ENCODE measurements at regions of chr17 and their contacts with region 1.

Region 1: DNA sequence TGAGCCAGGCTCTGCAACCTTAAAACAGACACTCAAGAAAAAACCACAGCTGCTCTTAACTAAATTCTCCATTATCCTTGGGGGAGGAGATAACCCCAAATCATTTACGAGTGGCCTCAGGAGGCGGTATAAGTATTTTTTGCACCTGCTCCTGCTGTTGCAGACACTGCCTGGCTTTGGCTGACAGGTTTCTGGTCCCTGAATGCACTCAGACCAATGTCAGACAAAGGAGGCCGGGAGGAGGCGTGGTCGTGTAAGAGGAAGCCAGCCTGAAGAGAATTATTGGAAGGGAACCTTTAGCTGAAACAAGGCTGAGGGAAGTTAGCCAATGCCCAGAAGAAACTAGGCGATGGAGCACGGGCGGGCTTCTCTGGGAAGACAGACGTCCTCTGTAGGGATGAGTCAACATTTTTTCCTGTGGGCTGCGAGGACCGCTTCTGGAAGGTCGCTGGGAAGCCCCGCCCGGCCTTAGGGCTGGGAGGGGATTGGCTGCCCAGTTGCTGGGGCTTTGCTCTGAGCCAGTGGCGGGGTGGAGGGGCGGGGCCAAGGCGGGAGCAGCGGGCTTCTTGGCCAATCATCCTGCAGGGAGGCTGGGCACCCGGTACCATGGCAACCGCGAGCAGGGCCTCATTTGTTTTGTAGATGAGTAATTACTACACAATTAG is 82.3 kb downstream of the CCDC182 start:
- DNase-seq: peak; percentile 95
- ATAC-seq: peak; percentile 97

Region 2: GRCh38 chr17:57255776-57256681 is 406.7 kb before region 1 on chr17 and contains the start of gene MSI2:
- intact Hi-C with region 1: loop called (anchors 5 kb)
- DNase-seq: peak; percentile 97
- ATAC-seq: peak; percentile 91
- total RNA-seq, gene MSI2: 96.8 TPM

Region 3: DNA sequence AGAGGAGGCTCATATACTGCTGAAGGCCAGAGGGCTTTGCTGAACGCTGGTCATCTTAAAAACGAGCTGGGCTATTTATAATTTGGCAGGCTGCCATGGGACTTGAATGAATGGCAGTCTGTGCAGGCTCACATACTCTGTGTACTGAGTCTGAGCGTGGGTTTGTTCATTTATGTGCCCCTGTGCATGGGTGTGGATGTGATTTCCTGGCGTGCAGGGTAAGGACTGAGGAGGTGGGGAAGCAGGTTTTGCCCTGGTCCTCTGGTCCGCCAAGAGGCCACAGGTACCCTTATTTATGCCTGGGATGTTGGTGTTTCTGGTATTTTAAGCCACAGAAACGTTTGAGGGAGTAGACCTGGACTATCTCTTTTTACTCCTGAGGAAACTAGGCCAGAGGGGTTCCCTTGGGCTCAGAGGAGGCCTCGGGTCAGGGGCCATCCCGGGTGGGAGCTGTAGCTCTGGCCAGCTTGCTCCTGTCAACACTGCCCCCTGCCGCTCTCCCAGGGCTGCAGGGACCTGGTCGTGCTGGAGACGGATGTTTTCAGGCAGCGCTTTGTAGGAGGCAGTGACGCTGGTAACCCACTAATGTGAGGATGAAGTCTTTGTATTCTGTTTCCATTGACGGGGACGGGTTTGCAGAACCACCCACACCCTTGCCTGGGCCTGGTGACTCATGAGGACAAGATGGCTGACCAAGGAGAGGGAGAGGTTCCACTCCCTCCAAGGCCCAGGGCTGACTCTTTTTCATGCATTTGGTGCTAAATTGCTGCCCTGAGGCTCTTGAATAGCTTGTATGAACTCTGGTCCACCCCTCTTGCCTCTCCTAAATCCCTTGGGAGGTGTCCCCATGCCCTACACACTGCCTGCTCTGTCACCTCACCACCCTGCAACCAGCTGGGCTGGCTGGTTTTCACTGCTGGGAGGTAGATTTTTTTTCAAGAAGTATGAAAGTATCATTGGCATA is 222.0 kb before region 1 on chr17:
- intact Hi-C with region 1: loop called (anchors 10 kb)
- DNase-seq: peak; percentile 74
- ATAC-seq: peak; percentile 77

Region 4: DNA sequence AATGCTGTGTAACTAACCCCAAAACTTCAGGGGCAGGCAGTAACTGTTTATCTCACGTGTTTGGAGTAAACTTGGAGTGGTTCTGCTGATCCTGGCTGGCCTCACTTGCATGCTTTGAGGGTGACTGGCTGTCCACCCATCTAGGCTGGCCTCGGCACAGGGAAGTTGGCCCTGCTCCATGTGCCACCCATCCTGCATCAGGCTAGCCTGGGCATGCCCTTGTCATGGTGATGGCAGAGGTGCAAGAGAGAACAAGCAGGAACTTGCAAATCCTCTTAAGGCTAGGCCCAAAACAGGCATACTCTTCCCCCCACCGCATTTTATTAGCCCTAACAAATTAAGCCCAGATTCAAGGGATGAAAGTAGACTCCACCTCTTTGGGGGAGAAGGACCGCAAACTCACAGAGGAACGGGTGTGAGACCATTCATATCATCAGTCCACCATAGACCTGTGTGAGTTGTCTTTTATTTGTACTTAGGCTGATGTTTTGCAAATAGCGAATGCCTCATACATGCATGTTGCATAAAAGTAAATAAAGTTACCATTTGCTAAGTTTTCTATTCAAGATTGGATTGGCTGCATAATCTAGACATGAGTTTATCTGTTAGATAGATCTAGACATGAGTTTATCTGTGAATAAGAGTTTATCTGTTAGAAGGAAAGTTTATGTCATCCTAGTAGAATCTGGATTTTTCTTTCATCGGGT is 138.7 kb before region 1 on chr17:
- intact Hi-C with region 1: loop called (anchors 10 kb)
- DNase-seq: peak; percentile 75
- ATAC-seq: peak; percentile 76

Region 5: DNA sequence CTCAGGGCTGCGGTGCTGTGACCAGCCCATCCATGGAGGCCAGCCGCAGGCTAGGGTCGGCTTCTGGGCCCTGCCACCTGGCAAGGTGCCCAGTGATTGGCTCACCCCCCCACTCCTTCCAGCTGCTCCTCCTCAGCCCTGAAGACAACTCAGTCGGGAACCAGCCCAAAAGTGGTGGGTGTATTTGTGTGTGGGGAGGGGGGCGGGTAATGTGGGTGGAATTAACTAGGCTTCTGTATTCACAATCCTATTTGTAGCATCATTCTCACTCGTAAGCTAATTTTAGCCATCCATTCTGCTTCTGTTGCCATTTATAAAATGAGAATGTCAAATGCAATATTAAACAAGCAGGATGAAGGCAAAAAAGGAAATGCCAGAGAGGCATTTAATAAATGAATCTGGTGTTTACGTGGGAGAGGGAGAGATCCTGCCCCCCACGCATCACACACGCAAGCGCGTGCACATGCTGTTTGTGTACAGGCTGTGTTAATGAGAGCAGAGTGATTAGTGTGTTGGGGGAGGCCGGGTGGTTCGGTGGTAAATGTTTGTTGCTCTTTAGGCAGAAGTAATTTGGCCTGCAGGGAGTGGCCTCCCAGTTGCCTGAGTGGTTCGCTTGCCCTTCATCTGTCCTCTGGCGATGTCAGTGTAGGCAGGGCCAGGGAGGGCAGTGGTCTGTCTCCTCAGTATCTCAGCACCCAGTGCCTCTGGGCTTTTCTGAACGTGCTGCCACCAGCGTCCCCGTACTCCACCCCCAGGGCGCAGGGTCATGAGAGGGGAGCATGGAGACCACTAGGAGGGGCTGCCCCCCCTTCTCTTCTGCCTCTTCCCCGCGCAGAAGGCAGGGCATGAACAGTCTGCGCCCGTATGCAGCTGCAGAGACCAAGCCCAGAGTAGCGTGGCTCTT is 57.8 kb before region 1 on chr17:
- intact Hi-C with region 1: loop called (anchors 5 kb)
- DNase-seq: peak; percentile 67
- ATAC-seq: peak; percentile 80

Region 6: DNA sequence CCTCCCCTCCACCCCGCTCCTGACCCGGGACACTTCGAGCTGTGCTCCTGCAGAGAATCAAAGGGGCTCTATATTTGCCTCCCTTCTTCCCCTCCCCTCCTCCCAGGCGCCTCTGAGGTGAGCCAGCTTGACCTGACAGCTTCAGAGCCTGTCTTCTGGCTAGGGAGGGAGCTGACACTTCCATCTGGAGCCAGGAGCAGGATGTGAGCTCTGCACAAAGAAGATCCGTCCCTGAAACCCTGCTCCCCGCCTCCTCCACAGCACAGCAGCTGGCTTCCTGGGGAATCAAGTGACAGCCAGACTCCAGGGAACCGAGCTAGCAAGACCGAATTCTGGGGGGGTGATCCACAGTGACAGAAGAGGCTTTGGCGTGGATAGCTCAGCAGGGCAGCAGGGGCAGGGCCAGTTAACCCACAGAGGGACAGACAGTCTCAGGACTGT is 45.1 kb after region 1 on chr17:
- intact Hi-C with region 1: no loop called
- DNase-seq: no peak
- ATAC-seq: peak; percentile 50

Region 7: DNA sequence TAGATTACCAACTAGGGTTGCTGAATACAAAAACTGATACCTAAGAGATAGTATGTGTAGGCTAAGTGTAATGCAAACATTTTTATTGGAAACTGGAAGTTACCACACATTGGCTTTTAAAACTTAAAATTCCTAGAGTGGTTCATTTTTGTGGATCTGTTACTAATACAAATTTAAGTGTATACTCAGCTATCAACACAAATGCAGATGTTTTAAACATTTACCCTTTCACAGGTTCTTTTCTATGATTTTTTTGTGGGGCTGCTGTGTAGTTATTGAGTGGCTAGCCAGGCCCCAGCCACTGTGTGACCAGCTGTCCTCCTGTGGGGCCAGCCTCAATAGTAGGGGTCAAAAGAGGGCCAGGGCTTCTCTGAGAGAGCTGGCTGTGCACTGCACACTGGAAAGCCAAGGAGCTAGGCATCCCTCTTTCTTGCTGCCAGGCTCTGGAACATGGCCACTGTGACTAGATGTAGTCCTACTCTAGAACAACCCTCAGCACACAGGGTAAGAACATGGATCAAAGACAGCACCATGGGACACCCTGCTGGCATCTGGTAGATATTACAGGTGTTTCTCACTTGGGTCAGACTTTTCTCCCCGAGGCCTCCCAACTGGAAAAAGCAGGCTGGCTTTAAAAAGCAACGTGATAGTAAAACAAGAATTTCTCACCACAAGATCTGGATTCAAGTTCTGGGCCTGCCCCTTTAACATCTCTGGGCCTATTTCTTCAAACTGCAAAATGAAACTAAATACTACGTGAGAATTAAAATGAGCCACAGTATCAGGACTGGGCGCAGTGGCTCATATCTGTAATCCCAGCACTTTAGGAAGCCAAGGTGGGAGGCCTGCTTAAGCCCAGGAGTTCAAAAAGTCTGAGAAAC is 332.5 kb after region 1 on chr17:
- intact Hi-C with region 1: loop called (anchors 5 kb)
- DNase-seq: no peak
- ATAC-seq: peak; percentile 93